Panc1 (cell line): ENCODE measurements at regions of chr7 and their contacts with region 1.

Region 1: GRCh38 chr7:23273141-23273599 is 26.0 kb upstream of the MALSU1 start:
- DNase-seq: peak; percentile 87
- ATAC-seq: peak; percentile 98
- H3K4me3 ChIP-seq: peak overlapping the region; percentile 12 to 28; a peak in 3 of 4 replicates
- H3K27ac ChIP-seq: 0 out of 2 replicates have a peak overlapping the region, but pooled peaks have one; percentile 17
- H3K4me1 ChIP-seq: peaks cover 11% of the 10 kb centered on the region
- H3K27me3 ChIP-seq: no peaks in the 10 kb centered on the region
- CTCF ChIP-seq: peak; percentile 99

Region 2: DNA sequence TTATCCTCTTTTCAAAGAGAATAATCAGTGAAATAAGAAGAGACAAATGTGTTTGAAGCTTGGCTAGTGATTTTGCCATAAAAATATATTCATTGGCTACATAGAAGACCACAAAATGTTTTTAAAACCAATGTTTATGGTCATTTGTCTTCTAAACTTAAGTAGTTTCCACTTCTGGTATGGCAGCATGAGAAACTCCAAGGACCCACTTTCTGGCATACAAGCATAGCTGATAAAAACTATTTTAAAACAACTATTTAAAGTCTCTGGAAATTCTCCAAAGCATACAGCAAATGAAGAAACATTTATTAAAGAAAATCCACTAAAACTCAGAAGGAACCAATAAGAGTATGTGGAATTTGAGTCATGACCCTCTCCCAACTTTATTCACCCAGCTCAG is 361.3 kb before region 1 on chr7:
- CTCF ChIA-PET with region 1: no interaction called
- POLR2A ChIA-PET with region 1: no interaction called
- in situ Hi-C with region 1: no loop called
- intact Hi-C with region 1: no loop called
- DNase-seq: no peak
- ATAC-seq: no peak
- H3K4me3 ChIP-seq: no peak overlapping the region
- H3K27ac ChIP-seq: no peak overlapping the region
- H3K4me1 ChIP-seq: no peaks in the 10 kb centered on the region
- H3K27me3 ChIP-seq: no peaks in the 10 kb centered on the region
- CTCF ChIP-seq: no peak

Region 3: DNA sequence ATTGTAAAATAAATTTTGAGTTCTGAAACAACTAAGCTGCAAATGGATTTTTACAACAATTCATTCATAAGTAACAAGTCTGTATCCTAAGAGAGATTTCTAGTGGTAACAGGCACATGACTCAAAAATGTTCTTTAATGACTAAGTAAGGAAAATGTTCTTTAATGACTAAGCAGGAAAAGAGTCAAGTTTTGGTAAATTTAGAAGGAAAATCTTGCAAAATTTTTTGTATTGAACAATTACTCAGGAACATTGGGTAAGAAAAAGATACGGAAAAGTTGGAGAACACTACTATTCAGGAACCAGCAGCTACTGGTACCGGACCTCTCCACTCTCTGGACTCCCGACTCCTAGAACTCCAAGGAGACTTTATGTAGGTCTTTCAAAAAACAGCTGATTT is 292.7 kb before region 1 on chr7:
- CTCF ChIA-PET with region 1: no interaction called
- POLR2A ChIA-PET with region 1: no interaction called
- in situ Hi-C with region 1: no loop called
- intact Hi-C with region 1: no loop called
- DNase-seq: no peak
- ATAC-seq: no peak
- H3K4me3 ChIP-seq: no peak overlapping the region
- H3K27ac ChIP-seq: no peak overlapping the region
- H3K4me1 ChIP-seq: no peaks in the 10 kb centered on the region
- H3K27me3 ChIP-seq: no peaks in the 10 kb centered on the region
- CTCF ChIP-seq: no peak

Region 4: DNA sequence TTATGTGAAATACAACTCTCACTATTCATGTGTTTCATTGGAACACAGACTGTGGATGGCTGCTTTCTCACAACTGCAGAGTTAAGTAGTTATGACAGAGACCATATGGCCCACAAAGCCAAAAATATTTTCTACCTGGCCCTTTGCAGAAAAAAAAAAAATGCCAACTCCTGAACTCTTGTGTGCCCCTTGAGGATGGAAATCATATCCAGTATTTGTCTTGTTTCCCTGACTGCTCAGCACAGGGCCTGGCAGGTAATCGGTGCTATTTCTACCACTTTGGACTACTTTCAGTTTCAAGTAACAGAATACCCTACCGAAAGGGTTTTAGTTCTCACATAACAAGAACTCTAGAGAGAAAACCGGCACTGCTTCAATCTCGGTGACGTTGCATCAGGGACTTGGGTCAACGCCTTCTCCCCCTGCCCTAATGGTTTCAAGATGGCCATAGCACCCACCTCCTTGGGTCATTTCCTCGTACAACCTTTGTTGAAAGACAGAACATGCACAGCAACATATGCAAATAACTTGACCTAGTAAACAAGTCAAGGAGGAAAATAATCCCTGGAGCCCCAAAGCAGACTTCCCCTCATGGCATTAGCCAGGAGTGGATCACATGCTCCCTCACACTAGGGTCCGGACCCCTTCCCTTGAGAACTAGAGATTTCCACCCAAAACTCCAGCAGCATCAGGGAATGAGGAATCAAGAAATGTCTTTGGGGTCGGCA is 38.4 kb before region 1 on chr7:
- CTCF ChIA-PET with region 1: no interaction called
- POLR2A ChIA-PET with region 1: no interaction called
- in situ Hi-C with region 1: no loop called
- intact Hi-C with region 1: no loop called
- DNase-seq: no peak
- ATAC-seq: peak; percentile 59
- H3K4me3 ChIP-seq: peak overlapping the region in 1 of 2 experiments; percentile 7; a peak in 1 of 4 replicates
- H3K27ac ChIP-seq: no peak overlapping the region
- H3K4me1 ChIP-seq: no peaks in the 10 kb centered on the region
- H3K27me3 ChIP-seq: 0 out of 2 replicates have a peak, but pooled peaks cover 2% of the 10 kb centered on the region
- CTCF ChIP-seq: 0 out of 2 replicates have a peak, but pooled peaks have one; percentile 30

Region 5: DNA sequence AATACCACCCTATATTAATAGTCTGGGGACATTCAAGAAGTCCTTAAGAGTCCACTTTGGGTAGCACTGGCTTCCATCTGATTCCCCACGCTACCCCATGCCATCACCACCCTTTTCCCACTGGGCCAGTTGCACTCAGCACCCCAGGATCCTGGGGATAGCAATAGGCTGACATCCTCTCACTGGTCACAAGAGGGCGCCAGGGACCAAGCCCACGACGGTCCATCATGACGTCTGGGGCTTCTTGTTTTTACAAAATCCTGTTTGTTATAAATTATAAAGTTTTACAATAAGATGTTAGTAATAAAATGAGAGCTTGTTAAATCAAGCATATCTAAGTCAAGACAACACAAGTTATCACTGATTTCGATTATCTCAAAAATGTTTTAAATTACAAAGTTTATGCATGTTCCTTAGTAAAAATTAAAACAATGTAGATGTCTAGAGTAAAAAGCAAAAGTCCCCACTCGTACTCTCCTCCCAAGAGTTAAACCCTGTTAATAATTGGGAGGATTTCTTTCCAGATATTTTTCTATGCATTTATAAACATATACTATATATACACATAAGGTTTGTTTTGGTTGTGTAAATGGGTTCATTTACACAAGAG is 11.2 kb before region 1 on chr7:
- CTCF ChIA-PET with region 1: interaction called, 13 read pairs
- POLR2A ChIA-PET with region 1: interaction called, 4 read pairs
- in situ Hi-C with region 1: no loop called
- intact Hi-C with region 1: no loop called
- DNase-seq: peak; percentile 36
- ATAC-seq: peak; percentile 96
- H3K4me3 ChIP-seq: no peak overlapping the region
- H3K27ac ChIP-seq: no peak overlapping the region
- H3K4me1 ChIP-seq: no peaks in the 10 kb centered on the region
- H3K27me3 ChIP-seq: no peaks in the 10 kb centered on the region
- CTCF ChIP-seq: peak; percentile 99

Region 6: GRCh38 chr7:23357190-23358093 is 84.3 kb after region 1 on chr7:
- CTCF ChIA-PET with region 1: interaction called, 6 read pairs
- POLR2A ChIA-PET with region 1: no interaction called
- in situ Hi-C with region 1: no loop called
- intact Hi-C with region 1: loop called (anchors 5 kb)
- DNase-seq: peak; percentile 92
- ATAC-seq: peak; percentile 93
- H3K4me3 ChIP-seq: no peak overlapping the region
- H3K27ac ChIP-seq: peak overlapping the region; percentile 85
- H3K4me1 ChIP-seq: peaks cover 67% of the 10 kb centered on the region
- H3K27me3 ChIP-seq: no peaks in the 10 kb centered on the region
- CTCF ChIP-seq: peak; percentile 66; the same call in 1 of the 2 replicates

Region 7: DNA sequence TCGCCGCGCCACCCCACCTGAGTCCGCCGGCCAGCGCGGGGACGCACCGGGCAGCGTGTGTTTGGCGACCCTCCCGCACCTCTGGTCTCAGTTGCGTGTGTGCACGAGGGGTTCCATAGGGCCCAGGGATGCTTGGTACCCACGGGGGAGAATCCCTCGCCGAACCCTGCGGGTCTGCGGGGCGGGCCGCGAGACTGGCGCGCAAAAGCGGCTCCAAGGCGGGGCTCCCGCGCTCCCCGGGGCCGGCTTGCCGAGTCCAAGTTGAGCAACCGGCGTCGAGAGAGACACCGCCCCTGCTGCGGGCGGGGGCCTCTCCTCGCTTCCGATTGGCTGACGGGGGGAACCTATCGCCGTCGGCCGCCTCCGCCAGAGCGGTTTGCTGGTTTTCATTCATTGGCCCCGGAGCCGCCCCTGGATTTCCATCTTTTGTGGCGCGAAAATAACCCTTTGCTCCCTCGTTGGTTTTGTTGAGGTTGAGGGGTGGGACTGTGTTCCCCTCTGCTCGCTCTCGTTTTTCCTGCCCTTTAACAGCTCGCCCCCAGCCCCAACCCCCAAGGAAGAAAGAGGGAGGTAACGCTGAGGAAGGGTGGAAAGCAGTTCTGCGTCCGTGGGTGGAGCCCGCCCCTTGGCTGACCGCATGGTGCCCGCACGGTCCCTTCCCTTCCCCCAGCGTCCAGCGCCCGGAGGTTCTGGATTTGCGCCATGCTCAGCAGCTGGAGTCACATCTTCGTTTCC is 201.1 kb after region 1 on chr7:
- CTCF ChIA-PET with region 1: no interaction called
- POLR2A ChIA-PET with region 1: interaction called, 9 read pairs
- in situ Hi-C with region 1: no loop called
- intact Hi-C with region 1: loop called (anchors 10 kb)
- DNase-seq: no peak
- ATAC-seq: peak; percentile 82
- H3K4me3 ChIP-seq: peak overlapping the region; percentile 88 to 98
- H3K27ac ChIP-seq: peak overlapping the region; percentile 100
- H3K4me1 ChIP-seq: peaks cover 25% of the 10 kb centered on the region
- H3K27me3 ChIP-seq: no peaks in the 10 kb centered on the region
- CTCF ChIP-seq: no peak

Region 8: DNA sequence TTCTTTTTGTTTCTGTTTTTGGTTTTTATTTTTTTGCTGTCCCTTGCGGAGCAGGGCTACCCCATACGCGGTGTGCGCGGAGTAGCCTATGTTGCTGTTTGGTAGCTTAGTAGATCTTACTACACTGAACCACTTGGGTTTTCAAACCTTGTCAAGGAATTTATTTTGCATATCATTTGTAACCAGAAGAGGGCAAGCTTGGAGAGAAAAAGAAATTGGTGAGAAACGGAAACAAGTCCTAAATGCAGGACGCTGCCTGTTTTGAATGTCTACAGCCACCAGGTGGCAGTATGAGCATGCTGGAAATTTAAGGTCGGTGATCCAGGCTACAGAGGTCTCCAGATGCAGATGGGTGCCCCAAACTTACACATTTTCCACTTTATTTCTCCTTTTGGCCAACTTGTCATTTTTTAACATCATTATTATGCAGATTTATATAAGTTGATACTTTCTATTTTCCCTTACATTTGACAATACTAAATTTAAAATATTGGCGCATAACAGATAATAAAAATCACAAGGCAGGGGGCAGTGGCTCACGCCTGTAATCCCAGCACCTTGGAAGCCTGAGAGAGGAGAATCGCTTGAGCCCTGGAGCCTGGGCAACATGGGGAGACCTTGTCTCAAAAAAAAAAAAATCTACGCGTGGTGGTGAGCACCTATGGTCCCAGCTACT is 273.9 kb after region 1 on chr7:
- CTCF ChIA-PET with region 1: interaction called, 24 read pairs
- POLR2A ChIA-PET with region 1: no interaction called
- in situ Hi-C with region 1: no loop called
- intact Hi-C with region 1: loop called (anchors 1 kb)
- DNase-seq: peak; percentile 84
- ATAC-seq: peak; percentile 91
- H3K4me3 ChIP-seq: no peak overlapping the region
- H3K27ac ChIP-seq: no peak overlapping the region
- H3K4me1 ChIP-seq: no peaks in the 10 kb centered on the region
- H3K27me3 ChIP-seq: no peaks in the 10 kb centered on the region
- CTCF ChIP-seq: peak; percentile 99

Region 9: DNA sequence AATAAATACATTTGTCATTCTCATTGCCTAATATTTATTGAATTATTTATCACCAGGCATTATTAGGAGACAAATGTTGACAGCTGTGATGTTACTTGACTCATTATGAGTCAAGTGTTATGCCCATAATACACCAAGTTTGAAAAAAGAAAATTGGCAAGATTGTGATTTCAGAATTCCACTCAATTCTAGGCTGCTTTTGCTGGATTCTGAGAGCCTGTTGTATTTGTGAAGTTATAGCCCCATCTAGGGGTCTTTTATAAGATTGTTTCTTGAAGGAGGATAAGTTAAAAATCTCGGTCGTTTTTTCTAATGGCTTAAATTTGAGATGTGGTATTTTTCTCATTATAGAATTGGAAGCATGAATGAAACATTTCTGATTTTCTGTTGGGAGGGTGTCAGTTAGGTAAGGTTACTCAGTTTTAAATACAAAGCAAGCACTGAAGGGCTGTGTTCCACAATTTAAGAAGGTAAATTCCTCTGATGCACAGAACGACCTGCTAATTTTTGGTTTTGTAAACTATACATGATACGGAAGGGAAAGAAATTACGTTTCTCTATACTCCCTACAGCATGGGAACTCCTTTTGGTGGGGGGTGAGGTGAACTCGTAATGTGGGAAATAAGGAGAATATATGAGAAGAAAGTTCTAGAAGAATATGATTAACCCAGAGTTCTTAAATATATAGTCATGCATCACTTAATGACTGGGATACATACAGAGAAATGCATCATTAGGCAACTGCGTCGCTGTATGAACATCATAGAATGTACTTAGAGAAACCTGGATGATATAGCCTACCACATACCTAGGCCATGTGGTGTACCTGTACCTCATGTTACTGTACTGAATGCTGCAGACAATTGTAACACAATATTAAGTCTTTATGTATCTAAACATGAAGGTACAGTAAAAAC is 439.5 kb after region 1 on chr7:
- CTCF ChIA-PET with region 1: no interaction called
- POLR2A ChIA-PET with region 1: no interaction called
- in situ Hi-C with region 1: no loop called
- intact Hi-C with region 1: loop called (anchors 10 kb)
- DNase-seq: peak; percentile 74
- ATAC-seq: peak; percentile 72
- H3K4me3 ChIP-seq: no peak overlapping the region
- H3K27ac ChIP-seq: peak overlapping the region; percentile 49
- H3K4me1 ChIP-seq: peaks cover 22% of the 10 kb centered on the region
- H3K27me3 ChIP-seq: no peaks in the 10 kb centered on the region
- CTCF ChIP-seq: peak; percentile 63; the same call in 1 of the 2 replicates

Region 10: DNA sequence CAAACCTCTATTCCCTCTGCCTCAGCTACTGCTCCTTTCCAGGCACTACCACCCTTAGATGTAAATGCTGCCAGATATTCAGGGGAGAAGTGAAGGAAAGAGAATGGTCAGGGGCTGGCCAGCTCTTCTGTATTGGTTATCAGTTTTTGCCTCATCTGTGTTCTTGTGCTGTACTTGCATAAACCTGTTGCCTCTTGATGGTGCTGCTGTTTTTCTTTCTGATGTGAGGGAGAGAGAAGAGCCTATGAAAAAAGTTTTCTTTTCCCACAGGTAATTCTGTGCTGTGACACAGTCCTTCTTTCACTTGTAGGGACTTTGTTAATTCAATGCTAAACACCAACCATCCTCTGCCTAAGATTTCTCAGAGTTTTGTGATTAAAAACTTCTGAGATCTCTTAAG is 494.3 kb after region 1 on chr7:
- CTCF ChIA-PET with region 1: no interaction called
- POLR2A ChIA-PET with region 1: no interaction called
- in situ Hi-C with region 1: no loop called
- intact Hi-C with region 1: no loop called
- DNase-seq: no peak
- ATAC-seq: peak; percentile 56; the same call in 1 of the 2 replicates
- H3K4me3 ChIP-seq: no peak overlapping the region
- H3K27ac ChIP-seq: peak overlapping the region; percentile 36; the same call in 1 of the 2 replicates
- H3K4me1 ChIP-seq: peaks cover 2% of the 10 kb centered on the region; the same call in 1 of the 2 replicates
- H3K27me3 ChIP-seq: no peaks in the 10 kb centered on the region
- CTCF ChIP-seq: peak; percentile 25; the same call in 1 of the 2 replicates